ENCODE measurements at regions of chr5 and their contacts with region 1.

Region 1: GRCh38 chr5:181223058-181223728 is at the start of gene TRIM41:
- DNase-seq: peak; percentile 94
- ATAC-seq: peak; percentile 77
- H3K4me3 ChIP-seq: peak within 1 kb of the TSS; percentile 98
- H3K27ac ChIP-seq: peak within 1 kb of the TSS; percentile 95
- H3K4me1 ChIP-seq: peaks cover 20% of the 10 kb centered on the region
- H3K27me3 ChIP-seq: no peaks in the 10 kb centered on the region
- CTCF ChIP-seq: peak in 1 of 3 experiments; percentile 12; a peak in 1 of 6 replicates
- EP300 ChIP-seq: no peak
- POLR2A ChIP-seq: peak; percentile 98
- RAD21 ChIP-seq: no peak
- polyA plus RNA-seq, gene TRIM41: 1.0 to 3.2 TPM

Region 2: DNA sequence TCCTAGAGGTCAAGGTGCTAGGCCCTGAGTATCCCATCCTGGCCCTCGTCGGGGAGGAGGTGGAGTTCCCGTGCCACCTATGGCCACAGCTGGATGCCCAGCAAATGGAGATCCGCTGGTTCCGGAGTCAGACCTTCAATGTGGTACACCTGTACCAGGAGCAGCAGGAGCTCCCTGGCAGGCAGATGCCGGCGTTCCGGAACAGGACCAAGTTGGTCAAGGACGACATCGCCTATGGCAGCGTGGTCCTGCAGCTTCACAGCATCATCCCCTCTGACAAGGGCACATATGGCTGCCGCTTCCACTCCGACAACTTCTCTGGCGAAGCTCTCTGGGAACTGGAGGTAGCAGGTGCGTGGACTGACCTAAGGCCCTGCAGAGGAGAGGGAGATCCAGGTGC is 175.3 kb before region 1 on chr5:
- CTCF ChIA-PET with region 1: no interaction called
- POLR2A ChIA-PET with region 1: no interaction called
- RAD21 ChIA-PET with region 1: no interaction called
- SMC1A ChIA-PET with region 1: no interaction called
- in situ Hi-C with region 1: no loop called
- intact Hi-C with region 1: no loop called
- DNase-seq: no peak
- ATAC-seq: no peak
- H3K4me3 ChIP-seq: no peak overlapping the region
- H3K27ac ChIP-seq: no peak overlapping the region
- H3K4me1 ChIP-seq: peaks cover 12% of the 10 kb centered on the region
- H3K27me3 ChIP-seq: no peaks in the 10 kb centered on the region
- CTCF ChIP-seq: no peak
- EP300 ChIP-seq: no peak
- POLR2A ChIP-seq: no peak
- RAD21 ChIP-seq: no peak

Region 3: DNA sequence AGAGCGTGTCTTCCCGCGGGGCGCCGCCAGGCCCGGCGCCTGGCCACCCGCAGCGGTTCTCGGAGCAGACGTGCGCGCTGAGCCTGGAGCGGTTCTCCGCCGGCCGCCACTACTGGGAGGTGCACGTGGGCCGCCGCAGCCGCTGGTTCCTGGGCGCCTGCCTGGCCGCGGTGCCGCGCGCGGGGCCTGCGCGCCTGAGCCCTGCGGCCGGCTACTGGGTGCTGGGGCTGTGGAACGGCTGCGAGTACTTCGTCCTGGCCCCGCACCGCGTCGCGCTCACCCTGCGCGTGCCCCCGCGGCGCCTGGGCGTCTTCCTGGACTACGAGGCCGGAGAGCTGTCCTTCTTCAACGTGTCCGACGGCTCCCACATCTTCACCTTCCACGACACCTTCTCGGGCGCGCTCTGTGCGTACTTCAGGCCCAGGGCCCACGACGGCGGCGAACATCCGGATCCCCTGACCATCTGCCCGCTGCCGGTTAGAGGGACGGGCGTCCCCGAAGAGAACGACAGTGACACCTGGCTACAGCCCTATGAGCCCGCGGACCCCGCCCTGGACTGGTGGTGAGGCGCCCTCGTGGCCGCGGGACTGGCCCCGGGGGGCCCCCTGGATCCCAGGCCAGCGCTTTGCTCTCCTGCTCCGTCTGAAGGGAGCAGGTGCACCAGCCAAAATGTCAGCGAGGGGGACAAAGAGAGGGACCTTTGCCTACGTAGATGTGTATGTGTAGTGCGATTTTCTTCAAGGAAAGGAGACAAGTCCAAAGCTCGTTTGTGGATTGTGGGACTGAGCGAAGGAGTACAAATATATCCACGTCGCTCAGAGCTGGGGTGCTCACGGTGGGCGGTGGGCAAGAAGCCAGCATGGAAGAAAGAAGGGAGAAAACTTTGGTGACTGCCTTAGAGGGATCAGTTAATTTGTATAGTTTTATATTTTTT is 163.6 kb before region 1 on chr5:
- CTCF ChIA-PET with region 1: no interaction called
- POLR2A ChIA-PET with region 1: no interaction called
- RAD21 ChIA-PET with region 1: no interaction called
- SMC1A ChIA-PET with region 1: no interaction called
- in situ Hi-C with region 1: no loop called
- intact Hi-C with region 1: no loop called
- DNase-seq: no peak
- ATAC-seq: no peak
- H3K4me3 ChIP-seq: no peak overlapping the region
- H3K27ac ChIP-seq: no peak overlapping the region
- H3K4me1 ChIP-seq: no peaks in the 10 kb centered on the region
- H3K27me3 ChIP-seq: peaks cover 3 to 5% of the 10 kb centered on the region in 2 experiments; a peak in 3 of 4 replicates
- CTCF ChIP-seq: no peak
- EP300 ChIP-seq: no peak
- POLR2A ChIP-seq: no peak
- RAD21 ChIP-seq: no peak

Region 4: GRCh38 chr5:181207214-181208107 is 15.7 kb before region 1 on chr5:
- CTCF ChIA-PET with region 1: interaction called, 6 read pairs
- POLR2A ChIA-PET with region 1: interaction called, 15 read pairs
- RAD21 ChIA-PET with region 1: interaction called, 16 read pairs
- SMC1A ChIA-PET with region 1: interaction called, 7 read pairs
- in situ Hi-C with region 1: no loop called
- intact Hi-C with region 1: loop called (anchors 1 kb)
- DNase-seq: no peak
- ATAC-seq: peak; percentile 59
- H3K4me3 ChIP-seq: peak overlapping the region; percentile 83
- H3K27ac ChIP-seq: peak overlapping the region; percentile 51
- H3K4me1 ChIP-seq: peaks cover 14% of the 10 kb centered on the region
- H3K27me3 ChIP-seq: peaks cover 4 to 8% of the 10 kb centered on the region in 2 experiments; a peak in 3 of 4 replicates
- CTCF ChIP-seq: no peak
- EP300 ChIP-seq: no peak
- POLR2A ChIP-seq: no peak
- RAD21 ChIP-seq: no peak

Region 5: DNA sequence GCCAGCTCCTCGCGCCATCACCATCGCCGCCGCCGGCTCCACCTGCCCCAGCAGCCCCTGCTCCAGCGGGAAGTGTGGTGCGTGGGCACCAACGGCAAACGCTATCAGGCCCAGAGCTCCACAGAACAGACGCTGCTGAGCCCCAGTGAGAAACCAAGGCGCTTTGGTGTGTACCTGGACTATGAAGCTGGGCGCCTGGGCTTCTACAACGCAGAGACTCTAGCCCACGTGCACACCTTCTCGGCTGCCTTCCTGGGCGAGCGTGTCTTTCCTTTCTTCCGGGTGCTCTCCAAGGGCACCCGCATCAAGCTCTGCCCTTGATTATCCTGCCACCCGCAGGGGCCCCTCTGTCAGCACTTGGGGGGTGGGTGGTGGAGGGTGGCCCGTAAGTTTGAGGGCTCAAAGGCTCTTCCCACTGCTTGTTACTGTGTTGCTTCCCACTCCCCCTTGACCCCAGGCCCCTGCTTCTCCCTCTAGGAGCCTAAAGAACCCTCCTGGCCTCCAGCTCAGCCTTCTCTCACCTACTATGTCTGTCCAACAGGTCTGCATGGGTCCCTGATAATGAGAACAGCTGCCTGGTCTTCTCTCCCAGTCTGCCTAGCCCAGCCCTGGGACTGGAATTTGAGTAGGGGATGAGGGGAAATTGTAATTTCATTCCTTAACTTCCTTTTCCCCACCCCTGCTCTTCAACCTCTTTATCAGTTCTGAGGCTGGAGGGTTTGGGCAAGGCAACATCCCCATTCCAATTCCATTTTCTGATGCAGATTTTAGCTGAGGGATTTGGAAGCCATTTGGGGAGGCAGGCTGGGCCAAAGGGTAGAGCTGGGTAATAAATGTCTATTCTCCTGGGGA is 11.5 kb after region 1 on chr5:
- CTCF ChIA-PET with region 1: interaction called, 3 read pairs
- POLR2A ChIA-PET with region 1: interaction called, 10 read pairs
- RAD21 ChIA-PET with region 1: no interaction called
- SMC1A ChIA-PET with region 1: interaction called, 3 read pairs
- in situ Hi-C with region 1: no loop called
- intact Hi-C with region 1: no loop called
- DNase-seq: no peak
- ATAC-seq: peak; percentile 14
- H3K4me3 ChIP-seq: no peak overlapping the region
- H3K27ac ChIP-seq: no peak overlapping the region
- H3K4me1 ChIP-seq: peaks cover 3% of the 10 kb centered on the region; the same call in 1 of the 2 replicates
- H3K27me3 ChIP-seq: no peaks in the 10 kb centered on the region
- CTCF ChIP-seq: no peak
- EP300 ChIP-seq: no peak
- POLR2A ChIP-seq: peak; percentile 68
- RAD21 ChIP-seq: no peak

Region 6: GRCh38 chr5:181243512-181244343 is 20.5 kb after region 1 on chr5 and contains the start of gene RACK1:
- CTCF ChIA-PET with region 1: interaction called, 4 read pairs
- POLR2A ChIA-PET with region 1: interaction called, 36 read pairs
- RAD21 ChIA-PET with region 1: interaction called, 6 read pairs
- SMC1A ChIA-PET with region 1: interaction called, 5 read pairs
- in situ Hi-C with region 1: no loop called
- intact Hi-C with region 1: loop called (anchors 1 kb)
- DNase-seq: peak; percentile 89
- ATAC-seq: peak; percentile 66
- H3K4me3 ChIP-seq: peak within 1 kb of the TSS; percentile 98
- H3K27ac ChIP-seq: peak within 1 kb of the TSS; percentile 92
- H3K4me1 ChIP-seq: peaks cover 27% of the 10 kb centered on the region
- H3K27me3 ChIP-seq: no peaks in the 10 kb centered on the region
- CTCF ChIP-seq: no peak
- EP300 ChIP-seq: no peak
- POLR2A ChIP-seq: peak; percentile 99
- RAD21 ChIP-seq: no peak
- polyA plus RNA-seq, gene RACK1: 3,729 to 5,412 TPM

Region 7: DNA sequence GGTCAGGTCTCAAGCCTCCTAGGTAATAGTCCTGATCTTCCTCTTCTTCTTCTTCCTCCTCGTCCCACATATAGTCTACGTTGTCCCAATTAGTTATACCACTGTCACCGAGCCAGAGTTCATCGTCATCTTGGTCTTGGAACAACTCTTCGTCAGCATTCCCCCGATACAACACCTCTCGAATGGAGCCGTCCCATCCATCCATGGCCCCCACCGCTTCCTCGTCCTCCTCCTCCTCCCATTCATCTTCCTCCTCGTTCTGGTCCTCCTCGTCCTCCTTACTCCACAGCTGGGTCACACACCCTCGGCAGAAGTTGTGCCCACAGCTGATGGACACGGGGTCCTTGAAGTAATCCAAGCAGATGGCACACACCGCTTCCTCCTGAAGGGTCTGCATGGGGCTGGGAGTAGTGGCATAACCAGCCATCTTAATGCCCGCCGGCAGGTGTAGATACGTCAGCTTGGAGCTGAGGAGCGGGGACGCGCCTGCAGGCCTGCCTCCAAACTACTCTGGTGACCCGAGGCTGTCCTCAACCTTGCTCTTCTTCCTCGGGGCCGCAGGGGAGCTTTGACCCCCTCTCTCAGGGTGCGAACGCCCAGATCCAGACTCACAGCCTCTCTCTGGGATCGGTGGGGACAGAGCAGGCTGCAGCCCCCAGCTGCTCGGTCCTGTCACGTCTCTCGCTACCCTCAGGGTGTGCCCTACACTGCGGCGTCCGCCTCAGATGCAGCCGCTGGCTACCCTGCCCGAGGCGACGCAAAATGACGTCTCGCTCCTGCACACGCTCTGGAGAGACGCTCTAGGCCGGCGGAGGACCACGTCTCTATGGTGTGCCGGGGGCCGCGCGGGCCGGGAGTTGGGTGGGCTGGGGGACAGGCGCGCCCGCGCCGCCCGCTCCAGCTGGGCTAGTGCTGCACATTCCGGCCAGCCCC is 37.5 kb after region 1 on chr5 and contains the start of gene TRIM52:
- CTCF ChIA-PET with region 1: interaction called, 3 read pairs
- POLR2A ChIA-PET with region 1: interaction called, 10 read pairs
- RAD21 ChIA-PET with region 1: interaction called, 4 read pairs
- SMC1A ChIA-PET with region 1: interaction called, 5 read pairs
- in situ Hi-C with region 1: no loop called
- intact Hi-C with region 1: loop called (anchors 2 kb)
- DNase-seq: peak; percentile 77
- ATAC-seq: peak; percentile 92
- H3K4me3 ChIP-seq: peak within 1 kb of the TSS; percentile 95
- H3K27ac ChIP-seq: peak within 1 kb of the TSS; percentile 97
- H3K4me1 ChIP-seq: peaks cover 3% of the 10 kb centered on the region; the same call in 1 of the 2 replicates
- H3K27me3 ChIP-seq: no peaks in the 10 kb centered on the region
- CTCF ChIP-seq: peak in 1 of 3 experiments; percentile 19; a peak in 1 of 6 replicates
- EP300 ChIP-seq: no peak
- POLR2A ChIP-seq: peak; percentile 99
- RAD21 ChIP-seq: no peak
- polyA plus RNA-seq, gene TRIM52: 1.4 to 3.4 TPM